Panc1 (cell line): ENCODE measurements at regions of chr12 and their contacts with region 1.

Region 1: GRCh38 chr12:45170456-45171042 is 45.3 kb upstream of the ANO6 start:
- DNase-seq: peak; percentile 74
- ATAC-seq: peak; percentile 91
- H3K4me3 ChIP-seq: no peak overlapping the region
- H3K27ac ChIP-seq: no peak overlapping the region
- H3K4me1 ChIP-seq: no peaks in the 10 kb centered on the region
- H3K27me3 ChIP-seq: no peaks in the 10 kb centered on the region
- CTCF ChIP-seq: peak; percentile 94

Region 2: GRCh38 chr12:45388545-45388944 is 218.0 kb after region 1 on chr12:
- CTCF ChIA-PET with region 1: no interaction called
- POLR2A ChIA-PET with region 1: no interaction called
- in situ Hi-C with region 1: no loop called
- intact Hi-C with region 1: loop called (anchors 5 kb)
- DNase-seq: no peak
- ATAC-seq: no peak
- H3K4me3 ChIP-seq: no peak overlapping the region
- H3K27ac ChIP-seq: no peak overlapping the region
- H3K4me1 ChIP-seq: no peaks in the 10 kb centered on the region
- H3K27me3 ChIP-seq: no peaks in the 10 kb centered on the region
- CTCF ChIP-seq: peak; percentile 42; the same call in 1 of the 2 replicates